Heart left ventricle (tissue), 16 donors: ENCODE measurements at regions of chr10 and their contacts with region 1.

Region 1: DNA sequence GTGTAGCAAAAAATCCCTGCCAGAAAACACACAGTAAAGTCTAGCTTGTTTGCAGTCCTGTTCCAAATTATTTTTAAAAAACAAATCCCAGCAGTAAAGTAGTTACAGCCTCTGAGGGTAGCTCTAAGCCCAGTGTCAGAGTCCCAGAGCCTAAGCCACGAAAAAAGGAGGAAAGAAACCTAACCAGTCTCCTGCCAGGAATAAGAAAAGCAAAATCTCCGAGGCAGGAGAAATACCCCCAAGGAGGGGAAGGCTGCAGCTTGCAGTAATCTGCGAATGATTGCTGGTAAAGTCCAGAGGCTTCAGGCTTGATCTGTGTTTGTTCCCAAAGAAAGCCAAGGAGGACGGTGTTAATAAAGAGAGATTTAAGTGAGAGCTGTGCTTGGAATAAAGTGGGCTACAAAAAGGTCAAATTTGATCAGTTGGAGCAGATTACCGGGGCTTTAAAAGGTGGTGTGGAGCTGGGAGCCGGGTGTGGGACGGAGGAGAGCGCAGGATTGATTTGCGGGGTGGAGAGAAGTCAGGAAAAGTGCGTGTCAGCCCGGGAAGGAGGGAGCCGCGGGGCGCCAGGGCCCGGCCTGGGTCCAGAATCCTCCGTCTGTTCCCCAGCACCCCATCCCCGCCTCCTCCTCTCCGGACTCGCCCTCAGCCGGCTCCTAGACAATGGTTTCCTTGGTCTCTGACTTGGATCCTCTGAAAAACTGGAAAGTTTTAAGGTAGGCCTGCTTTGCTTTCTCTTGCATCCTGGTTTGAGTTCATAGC is 219.4 kb upstream of the CELF2 start:
- DNase-seq: peak in 1 of 5 donors; percentile 26
- ATAC-seq: peak; percentile 37 to 69 (median 50)
- H3K4me3 ChIP-seq: peak overlapping the region in 11 of 12 donors; percentile 6 to 53 (median 34)
- H3K27ac ChIP-seq: peak overlapping the region; percentile 67 to 91 (median 81)
- H3K4me1 ChIP-seq: peaks cover 0 to 65% (median 30%) of the 10 kb centered on the region in 12 donors
- H3K27me3 ChIP-seq: no peaks in the 10 kb centered on the region
- CTCF ChIP-seq: peak in 2 of 12 donors; percentile 5 to 19
- POLR2A ChIP-seq: no peak

Region 2: GRCh38 chr10:10872035-10872673 is 73.9 kb after region 1 on chr10:
- intact Hi-C with region 1: loop called in 2 of 10 experiments (anchors 5 to 10 kb)
- DNase-seq: peak in 3 of 5 donors; percentile 43 to 57 (median 54)
- ATAC-seq: peak; percentile 91 to 99 (median 97)
- H3K4me3 ChIP-seq: peak overlapping the region in 1 of 12 donors; percentile 20
- H3K27ac ChIP-seq: peak overlapping the region; percentile 53 to 91 (median 76)
- H3K4me1 ChIP-seq: peaks cover 0 to 29% (median 19%) of the 10 kb centered on the region in 12 donors
- H3K27me3 ChIP-seq: no peaks in the 10 kb centered on the region
- CTCF ChIP-seq: no peak
- POLR2A ChIP-seq: no peak

Region 3: GRCh38 chr10:10967029-10967428 is 168.7 kb after region 1 on chr10:
- intact Hi-C with region 1: no loop called
- DNase-seq: no peak
- ATAC-seq: no peak
- H3K4me3 ChIP-seq: no peak overlapping the region
- H3K27ac ChIP-seq: no peak overlapping the region
- H3K4me1 ChIP-seq: peaks cover 0 to 8% (median 0%) of the 10 kb centered on the region in 12 donors
- H3K27me3 ChIP-seq: no peaks in the 10 kb centered on the region
- CTCF ChIP-seq: no peak
- POLR2A ChIP-seq: no peak

Region 4: DNA sequence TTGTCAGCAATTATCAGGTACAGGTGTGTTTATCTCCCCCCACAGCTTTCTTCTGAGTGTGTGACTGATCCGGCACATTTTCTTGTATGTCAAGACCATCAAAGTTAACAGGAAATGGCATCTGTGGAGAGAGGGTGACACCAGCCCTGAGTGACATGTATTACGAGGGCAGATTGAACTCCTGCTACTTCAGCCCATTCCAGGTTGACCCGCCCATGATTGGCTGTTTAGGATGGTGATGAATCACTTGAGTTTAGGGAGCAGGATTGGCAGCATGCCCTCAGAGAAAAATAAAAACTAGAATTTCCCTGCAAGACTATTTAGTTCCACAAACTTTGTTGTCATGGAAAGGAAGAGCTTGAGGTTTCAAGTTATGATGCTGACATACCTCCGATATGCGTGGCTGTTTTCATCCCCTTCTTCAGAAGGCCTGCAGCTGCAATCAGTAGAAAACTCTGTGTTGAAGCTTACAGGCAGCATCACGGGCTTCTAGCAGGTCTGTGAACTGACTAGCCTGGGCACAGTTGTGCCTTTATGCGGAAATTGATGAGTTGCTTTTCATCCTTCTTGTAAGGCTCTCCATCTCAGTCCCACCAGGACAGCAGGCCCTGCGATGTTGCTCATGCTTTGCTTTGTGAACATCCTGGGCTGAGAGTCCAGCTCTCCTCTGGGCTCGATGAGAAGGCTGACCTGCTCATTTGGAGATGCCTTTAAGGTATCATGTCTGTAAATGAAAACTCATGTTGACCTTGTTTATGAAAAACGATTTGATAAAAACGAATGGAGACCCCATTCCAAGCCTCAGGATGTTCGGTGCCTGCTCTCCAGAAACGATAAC is 211.4 kb after region 1 on chr10:
- intact Hi-C with region 1: loop called in 3 of 10 experiments (anchors 5 to 10 kb)
- DNase-seq: no peak
- ATAC-seq: no peak
- H3K4me3 ChIP-seq: no peak overlapping the region
- H3K27ac ChIP-seq: no peak overlapping the region
- H3K4me1 ChIP-seq: peaks cover 0 to 22% (median 9%) of the 10 kb centered on the region in 12 donors
- H3K27me3 ChIP-seq: peaks cover 0 to 2% (median 0%) of the 10 kb centered on the region in 9 donors
- CTCF ChIP-seq: no peak
- POLR2A ChIP-seq: no peak